HCT116 (cell line): ENCODE measurements at regions of chrX and their contacts with region 1.

Region 1: GRCh38 chrX:154534862-154535670 is 11.6 kb downstream of the G6PD start:
- DNase-seq: peak; percentile 28
- ATAC-seq: peak; percentile 91
- H3K4me3 ChIP-seq: no peak overlapping the region
- H3K27ac ChIP-seq: peak overlapping the region; percentile 40; the same call in 1 of the 2 replicates
- H3K4me1 ChIP-seq: no peaks in the 10 kb centered on the region; a peak in 1 of 4 replicates
- H3K27me3 ChIP-seq: no peaks in the 10 kb centered on the region
- CTCF ChIP-seq: peak in 2 of 3 experiments; percentile 79 to 86; a peak in 4 of 6 replicates
- POLR2A ChIP-seq: no peak
- RAD21 ChIP-seq: no peak

Region 2: DNA sequence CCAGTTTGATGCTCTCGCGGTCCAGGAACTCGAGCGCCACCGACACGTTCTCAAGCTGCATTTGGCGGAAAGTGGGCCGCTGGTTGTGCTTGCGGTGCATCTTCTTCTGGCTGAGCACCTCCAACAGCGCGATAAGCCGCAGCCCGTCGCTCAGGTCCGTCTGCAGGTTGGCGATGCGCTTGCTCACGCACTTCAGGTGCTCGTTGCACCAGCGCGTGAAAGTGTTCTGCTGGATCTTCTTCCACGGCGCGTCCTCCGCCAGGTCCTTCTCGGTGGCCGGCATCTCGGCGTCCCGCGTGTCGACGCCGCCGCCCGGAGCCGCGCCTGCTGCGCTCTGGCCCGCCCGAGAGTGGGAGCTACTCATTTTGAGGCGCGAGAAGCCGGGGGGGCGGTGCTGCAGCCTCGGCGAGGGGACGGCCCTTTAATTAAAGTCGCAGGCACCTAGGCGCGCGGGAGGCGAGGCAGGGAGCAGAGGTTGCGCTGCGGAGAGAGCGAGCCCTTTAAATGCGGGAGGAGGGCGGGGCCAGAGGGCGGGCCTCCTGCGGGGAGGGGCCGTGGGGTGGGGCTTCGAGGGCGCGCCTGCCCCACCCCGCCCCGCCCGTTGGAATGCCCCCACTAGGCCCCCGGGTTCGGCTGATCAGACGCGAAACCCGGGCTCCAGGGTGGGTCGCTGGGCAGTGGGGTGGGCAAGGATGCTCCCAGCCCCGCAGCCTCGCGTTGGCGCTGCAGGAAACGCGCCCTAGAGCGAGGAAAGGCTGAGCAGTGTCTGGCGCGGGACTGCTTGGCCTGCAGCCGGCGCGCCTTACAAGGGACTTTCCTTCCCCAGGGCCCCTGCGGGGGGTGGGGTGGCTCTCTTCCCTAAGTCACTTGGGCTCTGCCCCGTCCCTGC is 163.9 kb before region 1 on chrX:
- CTCF ChIA-PET with region 1: interaction called, 18 read pairs
- POLR2A ChIA-PET with region 1: interaction called, 3 read pairs
- RAD21 ChIA-PET with region 1: no interaction called
- intact Hi-C with region 1: loop called (anchors 1 kb)
- DNase-seq: peak; percentile 76
- ATAC-seq: peak; percentile 49
- H3K4me3 ChIP-seq: peak overlapping the region; percentile 74 to 78
- H3K27ac ChIP-seq: peak overlapping the region; percentile 82
- H3K4me1 ChIP-seq: peaks cover 14 to 54% of the 10 kb centered on the region in 2 experiments
- H3K27me3 ChIP-seq: no peaks in the 10 kb centered on the region
- CTCF ChIP-seq: no peak
- POLR2A ChIP-seq: peak; percentile 93
- RAD21 ChIP-seq: no peak

Region 3: GRCh38 chrX:154452823-154453222 is 82.2 kb before region 1 on chrX:
- CTCF ChIA-PET with region 1: no interaction called
- POLR2A ChIA-PET with region 1: no interaction called
- RAD21 ChIA-PET with region 1: no interaction called
- intact Hi-C with region 1: no loop called
- DNase-seq: no peak
- ATAC-seq: no peak
- H3K4me3 ChIP-seq: no peak overlapping the region
- H3K27ac ChIP-seq: no peak overlapping the region
- H3K4me1 ChIP-seq: peaks cover 2 to 6% of the 10 kb centered on the region in 2 experiments; a peak in 1 of 4 replicates
- H3K27me3 ChIP-seq: no peaks in the 10 kb centered on the region
- CTCF ChIP-seq: no peak
- POLR2A ChIP-seq: no peak
- RAD21 ChIP-seq: no peak